ENCODE measurements at regions of chr2 and their contacts with region 1.

Region 1: DNA sequence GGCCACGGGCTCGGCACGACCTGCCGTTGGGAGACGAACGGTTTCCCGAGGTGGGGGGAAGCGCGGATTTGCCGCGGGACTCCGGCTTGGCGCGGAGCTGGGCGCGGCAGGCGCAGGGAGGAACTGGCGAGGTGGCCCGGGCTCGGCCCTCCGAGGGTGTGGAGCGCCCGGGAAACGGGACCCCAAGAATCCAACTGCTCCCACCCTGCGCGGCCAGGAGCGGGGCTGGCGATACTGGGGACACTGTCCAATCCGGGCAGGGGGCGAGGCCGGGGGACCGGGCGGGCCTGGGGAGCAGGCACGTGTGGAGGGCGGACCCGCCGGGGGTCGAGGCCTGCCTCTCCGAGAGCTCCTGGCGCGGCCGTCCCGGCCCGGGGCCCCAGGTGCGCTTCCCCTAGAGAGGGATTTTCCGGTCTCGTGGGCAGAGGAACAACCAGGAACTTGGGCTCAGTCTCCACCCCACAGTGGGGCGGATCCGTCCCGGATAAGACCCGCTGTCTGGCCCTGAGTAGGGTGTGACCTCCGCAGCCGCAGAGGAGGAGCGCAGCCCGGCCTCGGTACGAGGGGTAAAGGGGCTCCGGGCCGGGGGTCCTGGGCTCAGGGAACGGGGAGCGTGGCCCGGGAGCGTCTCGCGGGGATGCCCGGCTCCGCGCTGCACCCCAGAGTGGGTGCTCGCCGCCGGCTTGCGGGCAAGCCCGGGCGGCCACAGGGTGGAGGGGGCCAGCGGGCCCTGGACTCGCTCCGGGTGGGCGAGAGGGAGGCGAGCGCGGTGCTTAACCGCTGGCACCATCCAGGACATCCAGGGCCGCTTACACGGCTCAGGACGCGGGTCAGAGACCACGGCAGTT is at the start of gene ANXA4:
- DNase-seq: peak; percentile 87
- H3K4me3 ChIP-seq: peak within 1 kb of the TSS; percentile 79 to 87 (median 83)
- H3K27ac ChIP-seq: peak within 1 kb of the TSS; percentile 84
- H3K4me1 ChIP-seq: peaks cover 25% of the 10 kb centered on the region
- H3K27me3 ChIP-seq: no peaks in the 10 kb centered on the region
- CTCF ChIP-seq: no peak
- total RNA-seq, gene ANXA4: 71.0 to 147 TPM

Region 2: GRCh38 chr2:69755862-69756467 is 14.1 kb after region 1 on chr2:
- CTCF ChIA-PET with region 1: no interaction called
- dilution Hi-C with region 1: no loop called
- in situ Hi-C with region 1: no loop called
- intact Hi-C with region 1: loop called (anchors 2 kb)
- DNase-seq: peak; percentile 94
- H3K4me3 ChIP-seq: peak overlapping the region in 1 of 3 experiments; percentile 27
- H3K27ac ChIP-seq: peak overlapping the region; percentile 59
- H3K4me1 ChIP-seq: peaks cover 21% of the 10 kb centered on the region
- H3K27me3 ChIP-seq: no peaks in the 10 kb centered on the region
- CTCF ChIP-seq: no peak

Region 3: DNA sequence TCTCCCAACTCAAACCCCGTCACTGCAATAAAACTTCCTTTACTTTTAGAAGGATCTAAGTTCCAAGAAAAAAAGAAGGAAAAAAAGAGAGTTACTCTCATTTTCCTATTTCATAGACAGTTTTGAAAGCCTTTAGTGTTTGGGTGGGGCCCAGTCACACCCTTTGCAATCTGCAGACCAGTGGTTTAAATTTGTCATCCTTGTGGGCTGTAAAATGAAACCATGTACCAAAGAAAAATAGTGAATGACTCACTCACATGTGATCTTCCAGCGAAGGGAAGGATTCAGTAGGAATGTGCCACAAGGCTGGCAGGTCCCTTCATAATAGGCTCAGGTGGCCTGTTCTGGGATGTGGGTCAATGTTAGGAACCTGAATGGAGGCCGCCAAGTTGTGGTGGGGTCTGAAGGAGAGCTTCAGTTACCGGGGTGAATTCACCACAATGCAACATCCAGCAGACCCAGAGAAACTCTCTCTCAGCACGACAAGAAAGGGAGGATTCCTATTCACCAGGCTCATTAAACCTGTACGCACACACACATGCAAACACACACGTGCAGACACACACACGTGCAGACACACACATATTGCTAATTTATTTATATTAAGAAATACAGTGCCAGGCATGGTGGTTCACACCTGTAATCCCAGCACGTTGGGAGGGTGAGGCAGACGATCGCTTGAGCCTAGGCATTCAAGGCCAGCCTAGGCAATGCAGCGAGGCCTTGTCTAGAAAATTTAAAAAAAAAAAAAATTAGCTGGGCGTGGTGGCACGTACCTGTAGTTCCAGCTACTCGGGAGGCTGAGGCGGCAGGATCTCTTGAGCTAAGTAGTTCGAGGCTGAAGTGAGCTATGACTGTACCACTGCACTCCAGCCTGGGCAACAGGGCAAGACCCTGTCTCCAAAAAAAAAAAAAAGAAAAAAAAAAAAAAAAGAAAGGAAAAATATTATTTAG is 28.6 kb after region 1 on chr2:
- CTCF ChIA-PET with region 1: no interaction called
- dilution Hi-C with region 1: loop called (anchors 5 kb)
- in situ Hi-C with region 1: no loop called
- intact Hi-C with region 1: loop called (anchors 2 kb)
- DNase-seq: peak; percentile 91
- H3K4me3 ChIP-seq: no peak overlapping the region
- H3K27ac ChIP-seq: peak overlapping the region; percentile 85
- H3K4me1 ChIP-seq: peaks cover 59% of the 10 kb centered on the region
- H3K27me3 ChIP-seq: no peaks in the 10 kb centered on the region
- CTCF ChIP-seq: no peak

Region 4: GRCh38 chr2:69779258-69780001 is 37.6 kb after region 1 on chr2:
- CTCF ChIA-PET with region 1: no interaction called
- dilution Hi-C with region 1: loop called (anchors 5 kb)
- in situ Hi-C with region 1: no loop called
- intact Hi-C with region 1: no loop called
- DNase-seq: peak; percentile 64
- H3K4me3 ChIP-seq: no peak overlapping the region
- H3K27ac ChIP-seq: no peak overlapping the region
- H3K4me1 ChIP-seq: peaks cover 22% of the 10 kb centered on the region
- H3K27me3 ChIP-seq: no peaks in the 10 kb centered on the region
- CTCF ChIP-seq: no peak

Region 5: GRCh38 chr2:69798909-69799526 is 57.2 kb after region 1 on chr2:
- CTCF ChIA-PET with region 1: no interaction called
- dilution Hi-C with region 1: no loop called
- in situ Hi-C with region 1: no loop called
- intact Hi-C with region 1: loop called (anchors 5 kb)
- DNase-seq: peak; percentile 88
- H3K4me3 ChIP-seq: peak overlapping the region; percentile 5 to 42 (median 33)
- H3K27ac ChIP-seq: peak overlapping the region; percentile 87
- H3K4me1 ChIP-seq: peaks cover 21% of the 10 kb centered on the region
- H3K27me3 ChIP-seq: no peaks in the 10 kb centered on the region
- CTCF ChIP-seq: no peak

Region 6: DNA sequence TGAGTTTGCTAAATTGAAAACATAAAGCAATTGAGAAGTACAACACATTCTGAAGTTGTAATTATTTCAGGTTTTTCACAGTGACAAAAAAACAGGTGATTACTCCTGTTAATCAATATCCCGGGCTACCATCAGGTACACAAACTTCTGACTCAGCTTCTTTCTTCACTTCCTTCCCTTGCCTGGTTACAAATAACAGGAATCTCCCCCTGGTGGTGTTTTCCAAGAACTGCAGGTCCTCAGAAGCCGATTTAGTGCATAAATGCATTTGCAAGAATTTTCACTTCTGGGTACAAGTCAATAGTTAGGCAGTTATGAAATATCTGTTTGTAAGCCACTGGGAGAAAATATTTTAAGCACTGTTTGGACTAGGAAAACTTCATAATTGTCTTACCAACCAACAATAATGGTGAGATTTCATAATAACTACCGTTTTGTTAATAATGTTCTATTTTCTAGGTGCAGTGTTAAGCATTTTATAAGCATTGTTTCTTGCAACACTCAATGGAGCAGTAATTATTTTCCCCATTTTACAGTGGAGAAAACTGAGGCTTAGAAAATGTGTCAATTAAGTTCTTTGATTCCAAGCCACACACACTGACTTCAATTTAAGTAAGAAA is 75.2 kb after region 1 on chr2:
- CTCF ChIA-PET with region 1: interaction called, 17 read pairs
- dilution Hi-C with region 1: no loop called
- in situ Hi-C with region 1: no loop called
- intact Hi-C with region 1: loop called (anchors 1 kb)
- DNase-seq: peak; percentile 77
- H3K4me3 ChIP-seq: no peak overlapping the region
- H3K27ac ChIP-seq: no peak overlapping the region
- H3K4me1 ChIP-seq: no peaks in the 10 kb centered on the region
- H3K27me3 ChIP-seq: no peaks in the 10 kb centered on the region
- CTCF ChIP-seq: peak; percentile 76 to 83

Region 7: GRCh38 chr2:69893684-69894551 is 152.1 kb after region 1 on chr2 and contains the start of gene SNRNP27:
- CTCF ChIA-PET with region 1: no interaction called
- dilution Hi-C with region 1: no loop called
- in situ Hi-C with region 1: no loop called
- intact Hi-C with region 1: loop called (anchors 5 kb)
- DNase-seq: peak; percentile 71
- H3K4me3 ChIP-seq: peak within 1 kb of the TSS; percentile 59 to 96 (median 96)
- H3K27ac ChIP-seq: peak within 1 kb of the TSS; percentile 94
- H3K4me1 ChIP-seq: peaks cover 10% of the 10 kb centered on the region
- H3K27me3 ChIP-seq: no peaks in the 10 kb centered on the region
- CTCF ChIP-seq: no peak
- total RNA-seq, gene SNRNP27: 25.3 to 51.2 TPM

Measured in mammary epithelial cell (primary cell).